CD4-positive, alpha-beta T cell (primary cell): ENCODE measurements at regions of chr1 and their contacts with region 1.

Region 1: GRCh38 chr1:149886396-149887195 is 12.8 kb upstream of the BOLA1 start:
- DNase-seq: peak; percentile 67 to 98 (median 82)
- ATAC-seq: peak; percentile 65
- H3K4me3 ChIP-seq: peak overlapping the region; percentile 87
- H3K4me3 Mint-ChIP-seq: no peak overlapping the region
- H3K27ac ChIP-seq: peak overlapping the region; percentile 91 to 96
- H3K27ac Mint-ChIP-seq: no peak overlapping the region
- H3K4me1 ChIP-seq: peaks cover 31% of the 10 kb centered on the region
- H3K4me1 Mint-ChIP-seq: peaks cover 10% of the 10 kb centered on the region
- H3K27me3 ChIP-seq: no peaks in the 10 kb centered on the region
- H3K27me3 Mint-ChIP-seq: no peaks in the 10 kb centered on the region
- CTCF ChIP-seq: no peak

Region 2: DNA sequence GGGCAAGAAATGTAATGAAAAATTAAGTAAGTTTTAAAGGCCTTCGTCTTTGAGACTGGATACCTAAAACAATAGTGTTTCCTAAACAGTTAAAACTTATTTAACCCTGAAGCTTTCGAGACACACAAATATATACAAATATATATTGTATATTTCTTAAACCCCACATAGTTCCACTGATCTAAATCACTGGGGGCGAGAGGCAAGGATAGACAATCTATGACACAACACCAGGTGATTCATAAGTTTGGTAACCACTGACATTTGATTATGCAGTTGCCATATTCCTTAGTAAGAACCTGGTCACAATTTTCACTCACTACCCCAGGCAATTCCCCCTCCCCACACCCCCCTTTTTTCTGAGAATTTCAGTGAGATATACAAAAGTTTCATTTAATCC is 42.5 kb before region 1 on chr1:
- CTCF ChIA-PET with region 1: interaction called, 7 read pairs
- POLR2A ChIA-PET with region 1: interaction called, 259 read pairs
- intact Hi-C with region 1: no loop called
- DNase-seq: peak in 4 of 14 experiments; percentile 34 to 68 (median 49)
- ATAC-seq: no peak
- H3K4me3 ChIP-seq: peak overlapping the region; percentile 67
- H3K4me3 Mint-ChIP-seq: peak overlapping the region; percentile 89
- H3K27ac ChIP-seq: peak overlapping the region; percentile 55
- H3K27ac Mint-ChIP-seq: peak overlapping the region; percentile 85
- H3K4me1 ChIP-seq: peaks cover 22% of the 10 kb centered on the region
- H3K4me1 Mint-ChIP-seq: peaks cover 58% of the 10 kb centered on the region
- H3K27me3 ChIP-seq: no peaks in the 10 kb centered on the region
- H3K27me3 Mint-ChIP-seq: no peaks in the 10 kb centered on the region
- CTCF ChIP-seq: no peak

Region 3: DNA sequence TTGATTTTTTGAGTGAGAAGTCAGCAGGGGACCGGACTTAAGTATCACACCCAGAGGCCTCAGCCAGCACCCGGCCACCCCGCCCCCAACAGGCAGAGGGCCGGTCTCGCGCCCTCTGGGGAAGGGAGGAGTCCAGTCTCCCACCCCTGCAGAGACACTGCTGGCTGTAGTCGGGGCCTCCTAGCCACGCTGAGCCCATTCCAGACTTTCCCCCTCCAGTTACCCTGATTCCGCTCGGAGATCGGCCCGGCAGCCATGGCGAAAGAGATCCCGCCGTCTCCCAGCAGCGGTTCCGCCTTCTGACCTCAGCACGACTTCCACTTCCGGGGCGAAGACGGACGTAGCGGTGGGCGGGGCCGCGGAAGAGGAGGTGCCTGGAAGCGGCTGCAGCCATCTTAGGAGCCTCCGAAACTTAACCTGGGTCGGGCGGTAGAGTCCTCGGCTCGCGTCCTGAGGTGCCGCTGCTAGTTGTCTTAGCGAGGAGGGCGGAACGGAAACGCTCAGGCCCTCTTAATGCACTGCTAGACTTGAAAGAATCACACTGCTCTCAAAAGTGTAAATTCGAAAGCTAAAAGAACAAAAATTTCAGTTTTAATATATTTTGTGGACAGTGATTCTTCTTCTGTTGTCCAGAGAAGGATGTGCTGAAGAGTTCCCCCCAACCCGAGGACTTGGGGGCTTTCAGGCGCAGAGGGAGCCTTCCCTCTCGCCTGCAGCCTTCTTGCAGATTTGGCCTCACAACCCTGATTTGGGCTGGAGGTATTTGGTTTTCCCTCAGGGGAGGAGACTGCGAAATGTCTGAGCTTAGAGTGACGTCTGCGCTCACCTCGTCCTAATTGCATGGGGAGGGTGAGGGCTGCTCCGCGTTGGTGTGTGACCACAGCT is 41.1 kb after region 1 on chr1 and contains the start of gene SF3B4:
- CTCF ChIA-PET with region 1: no interaction called
- POLR2A ChIA-PET with region 1: interaction called, 139 read pairs
- intact Hi-C with region 1: loop called (anchors 1 to 2 kb)
- DNase-seq: peak; percentile 93 to 98 (median 94)
- ATAC-seq: peak; percentile 91
- H3K4me3 ChIP-seq: peak within 1 kb of the TSS; percentile 94
- H3K4me3 Mint-ChIP-seq: peak within 1 kb of the TSS; percentile 98
- H3K27ac ChIP-seq: peak within 1 kb of the TSS; percentile 87 to 93
- H3K27ac Mint-ChIP-seq: peak within 1 kb of the TSS; percentile 99
- H3K4me1 ChIP-seq: peaks cover 28% of the 10 kb centered on the region
- H3K4me1 Mint-ChIP-seq: peaks cover 47% of the 10 kb centered on the region
- H3K27me3 ChIP-seq: no peaks in the 10 kb centered on the region
- H3K27me3 Mint-ChIP-seq: peaks cover 8% of the 10 kb centered on the region
- CTCF ChIP-seq: no peak
- total RNA-seq, gene SF3B4: 38.0 to 38.6 TPM

Region 4: DNA sequence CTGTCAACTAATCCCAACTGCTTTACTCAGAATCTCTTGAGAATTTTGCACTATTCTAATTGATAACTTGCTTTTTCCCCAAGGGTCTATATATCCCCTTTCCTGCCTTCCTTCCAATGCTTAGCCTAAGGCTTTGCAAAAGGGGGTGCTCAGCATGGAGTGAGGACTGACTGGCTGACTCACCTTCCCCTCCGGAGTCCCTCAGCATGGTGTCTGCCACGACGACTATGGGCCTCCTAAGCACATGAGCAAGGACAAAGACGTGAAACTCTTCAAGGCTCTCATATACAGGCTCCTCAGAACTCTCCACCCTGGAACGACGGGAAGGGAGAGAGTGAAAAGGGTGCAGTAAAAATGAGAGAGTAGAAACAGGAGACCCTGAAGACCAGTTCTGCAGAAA is 63.3 kb after region 1 on chr1:
- CTCF ChIA-PET with region 1: no interaction called
- POLR2A ChIA-PET with region 1: no interaction called
- intact Hi-C with region 1: no loop called
- DNase-seq: no peak
- ATAC-seq: no peak
- H3K4me3 ChIP-seq: no peak overlapping the region
- H3K4me3 Mint-ChIP-seq: no peak overlapping the region
- H3K27ac ChIP-seq: no peak overlapping the region
- H3K27ac Mint-ChIP-seq: no peak overlapping the region
- H3K4me1 ChIP-seq: no peaks in the 10 kb centered on the region
- H3K4me1 Mint-ChIP-seq: no peaks in the 10 kb centered on the region
- H3K27me3 ChIP-seq: no peaks in the 10 kb centered on the region
- H3K27me3 Mint-ChIP-seq: no peaks in the 10 kb centered on the region
- CTCF ChIP-seq: no peak

Region 5: GRCh38 chr1:150051089-150051373 is 164.4 kb after region 1 on chr1:
- CTCF ChIA-PET with region 1: interaction called, 3 read pairs
- POLR2A ChIA-PET with region 1: interaction called, 14 read pairs
- intact Hi-C with region 1: loop called in 1 of 2 experiments (anchors 1 kb)
- DNase-seq: no peak
- ATAC-seq: no peak
- H3K4me3 ChIP-seq: no peak overlapping the region
- H3K4me3 Mint-ChIP-seq: no peak overlapping the region
- H3K27ac ChIP-seq: no peak overlapping the region
- H3K27ac Mint-ChIP-seq: no peak overlapping the region
- H3K4me1 ChIP-seq: no peaks in the 10 kb centered on the region
- H3K4me1 Mint-ChIP-seq: no peaks in the 10 kb centered on the region
- H3K27me3 ChIP-seq: no peaks in the 10 kb centered on the region
- H3K27me3 Mint-ChIP-seq: peaks cover 6% of the 10 kb centered on the region
- CTCF ChIP-seq: no peak

Region 6: GRCh38 chr1:150149271-150150132 is 262.9 kb after region 1 on chr1 and contains the start of gene PLEKHO1:
- CTCF ChIA-PET with region 1: no interaction called
- POLR2A ChIA-PET with region 1: interaction called, 38 read pairs
- intact Hi-C with region 1: no loop called
- DNase-seq: peak; percentile 70 to 92 (median 86)
- ATAC-seq: peak; percentile 60
- H3K4me3 ChIP-seq: peak within 1 kb of the TSS; percentile 97
- H3K4me3 Mint-ChIP-seq: peak within 1 kb of the TSS; percentile 94
- H3K27ac ChIP-seq: peak within 1 kb of the TSS; percentile 79 to 82
- H3K27ac Mint-ChIP-seq: peak within 1 kb of the TSS; percentile 96
- H3K4me1 ChIP-seq: peaks cover 57% of the 10 kb centered on the region
- H3K4me1 Mint-ChIP-seq: peaks cover 74% of the 10 kb centered on the region
- H3K27me3 ChIP-seq: no peaks in the 10 kb centered on the region
- H3K27me3 Mint-ChIP-seq: no peaks in the 10 kb centered on the region
- CTCF ChIP-seq: no peak
- total RNA-seq, gene PLEKHO1: 97.6 to 110 TPM

Region 7: GRCh38 chr1:150567717-150568593 is 681.4 kb after region 1 on chr1:
- CTCF ChIA-PET with region 1: no interaction called
- POLR2A ChIA-PET with region 1: interaction called, 26 read pairs
- intact Hi-C with region 1: no loop called
- DNase-seq: peak in 5 of 14 experiments; percentile 46 to 68 (median 58)
- ATAC-seq: peak; percentile 15
- H3K4me3 ChIP-seq: peak overlapping the region; percentile 50
- H3K4me3 Mint-ChIP-seq: peak overlapping the region; percentile 83
- H3K27ac ChIP-seq: peak overlapping the region; percentile 59 to 97
- H3K27ac Mint-ChIP-seq: peak overlapping the region; percentile 98
- H3K4me1 ChIP-seq: peaks cover 98% of the 10 kb centered on the region
- H3K4me1 Mint-ChIP-seq: peaks cover 92% of the 10 kb centered on the region
- H3K27me3 ChIP-seq: no peaks in the 10 kb centered on the region
- H3K27me3 Mint-ChIP-seq: no peaks in the 10 kb centered on the region
- CTCF ChIP-seq: no peak

Region 8: DNA sequence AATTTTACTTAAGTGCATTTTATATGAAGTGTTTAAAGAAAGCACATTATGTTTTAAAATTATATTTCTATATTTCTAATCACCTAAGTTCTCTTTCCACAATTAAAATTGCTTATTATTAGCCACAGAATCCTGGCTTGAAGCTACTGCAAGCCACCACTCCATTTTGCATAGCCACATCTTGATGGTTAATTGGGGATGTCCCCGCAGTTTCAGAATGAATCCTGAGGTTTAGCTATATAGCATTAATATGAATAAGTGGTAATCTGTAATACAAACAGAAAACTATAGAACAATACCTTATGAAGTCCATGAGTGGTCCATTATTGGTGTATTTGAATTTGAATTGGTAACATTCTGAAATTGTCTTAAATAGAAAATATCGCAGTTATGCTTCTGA is 822.0 kb after region 1 on chr1:
- CTCF ChIA-PET with region 1: no interaction called
- POLR2A ChIA-PET with region 1: no interaction called
- intact Hi-C with region 1: no loop called
- DNase-seq: no peak
- ATAC-seq: no peak
- H3K4me3 ChIP-seq: no peak overlapping the region
- H3K4me3 Mint-ChIP-seq: no peak overlapping the region
- H3K27ac ChIP-seq: no peak overlapping the region
- H3K27ac Mint-ChIP-seq: no peak overlapping the region
- H3K4me1 ChIP-seq: no peaks in the 10 kb centered on the region
- H3K4me1 Mint-ChIP-seq: no peaks in the 10 kb centered on the region
- H3K27me3 ChIP-seq: no peaks in the 10 kb centered on the region
- H3K27me3 Mint-ChIP-seq: no peaks in the 10 kb centered on the region
- CTCF ChIP-seq: no peak